ENCODE measurements at regions of chr2 and their contacts with region 1.

Region 1: GRCh38 chr2:95022309-95023221 is 2.9 kb upstream of the MAL start:
- DNase-seq: peak; percentile 85
- H3K4me3 ChIP-seq: peak overlapping the region in 1 of 2 experiments; percentile 10; a peak in 1 of 4 replicates
- H3K27ac ChIP-seq: no peak overlapping the region
- H3K4me1 ChIP-seq: peaks cover 0 to 2% of the 10 kb centered on the region in 2 experiments; a peak in 1 of 4 replicates
- H3K27me3 ChIP-seq: peaks cover 85% of the 10 kb centered on the region
- CTCF ChIP-seq: peak; percentile 86
- EP300 ChIP-seq: no peak
- RAD21 ChIP-seq: peak; percentile 81

Region 2: GRCh38 chr2:95010126-95010525 is 12.4 kb before region 1 on chr2:
- CTCF ChIA-PET with region 1: interaction called, 18 read pairs
- POLR2A ChIA-PET with region 1: no interaction called
- DNase-seq: no peak
- H3K4me3 ChIP-seq: no peak overlapping the region
- H3K27ac ChIP-seq: no peak overlapping the region
- H3K4me1 ChIP-seq: no peaks in the 10 kb centered on the region
- H3K27me3 ChIP-seq: peaks cover 24% of the 10 kb centered on the region; the same call in 1 of the 2 replicates
- CTCF ChIP-seq: no peak
- EP300 ChIP-seq: no peak
- RAD21 ChIP-seq: no peak

Region 3: GRCh38 chr2:95034221-95034620 is 11.7 kb after region 1 on chr2:
- CTCF ChIA-PET with region 1: interaction called, 17 read pairs
- POLR2A ChIA-PET with region 1: no interaction called
- DNase-seq: peak; percentile 42
- H3K4me3 ChIP-seq: no peak overlapping the region
- H3K27ac ChIP-seq: no peak overlapping the region
- H3K4me1 ChIP-seq: peaks cover 0 to 3% of the 10 kb centered on the region in 2 experiments; a peak in 1 of 4 replicates
- H3K27me3 ChIP-seq: peaks cover 40% of the 10 kb centered on the region; the same call in 1 of the 2 replicates
- CTCF ChIP-seq: no peak
- EP300 ChIP-seq: no peak
- RAD21 ChIP-seq: no peak

Region 4: GRCh38 chr2:95053543-95053942 is 31.0 kb after region 1 on chr2:
- CTCF ChIA-PET with region 1: interaction called, 10 read pairs
- POLR2A ChIA-PET with region 1: no interaction called
- DNase-seq: no peak
- H3K4me3 ChIP-seq: no peak overlapping the region
- H3K27ac ChIP-seq: no peak overlapping the region
- H3K4me1 ChIP-seq: no peaks in the 10 kb centered on the region
- H3K27me3 ChIP-seq: peaks cover 50% of the 10 kb centered on the region
- CTCF ChIP-seq: no peak
- EP300 ChIP-seq: no peak
- RAD21 ChIP-seq: no peak

Region 5: GRCh38 chr2:95062242-95063085 is 39.9 kb after region 1 on chr2:
- CTCF ChIA-PET with region 1: interaction called, 10 read pairs
- POLR2A ChIA-PET with region 1: no interaction called
- DNase-seq: no peak
- H3K4me3 ChIP-seq: no peak overlapping the region
- H3K27ac ChIP-seq: no peak overlapping the region
- H3K4me1 ChIP-seq: no peaks in the 10 kb centered on the region
- H3K27me3 ChIP-seq: peaks cover 66% of the 10 kb centered on the region; the same call in 1 of the 2 replicates
- CTCF ChIP-seq: no peak
- EP300 ChIP-seq: no peak
- RAD21 ChIP-seq: no peak

Region 6: GRCh38 chr2:95115418-95115817 is 92.9 kb after region 1 on chr2:
- CTCF ChIA-PET with region 1: interaction called, 57 read pairs
- POLR2A ChIA-PET with region 1: no interaction called
- DNase-seq: peak; percentile 75
- H3K4me3 ChIP-seq: peak overlapping the region in 1 of 2 experiments; percentile 33; a peak in 1 of 4 replicates
- H3K27ac ChIP-seq: no peak overlapping the region
- H3K4me1 ChIP-seq: no peaks in the 10 kb centered on the region
- H3K27me3 ChIP-seq: no peaks in the 10 kb centered on the region
- CTCF ChIP-seq: peak; percentile 82
- EP300 ChIP-seq: no peak
- RAD21 ChIP-seq: peak; percentile 83

Region 7: DNA sequence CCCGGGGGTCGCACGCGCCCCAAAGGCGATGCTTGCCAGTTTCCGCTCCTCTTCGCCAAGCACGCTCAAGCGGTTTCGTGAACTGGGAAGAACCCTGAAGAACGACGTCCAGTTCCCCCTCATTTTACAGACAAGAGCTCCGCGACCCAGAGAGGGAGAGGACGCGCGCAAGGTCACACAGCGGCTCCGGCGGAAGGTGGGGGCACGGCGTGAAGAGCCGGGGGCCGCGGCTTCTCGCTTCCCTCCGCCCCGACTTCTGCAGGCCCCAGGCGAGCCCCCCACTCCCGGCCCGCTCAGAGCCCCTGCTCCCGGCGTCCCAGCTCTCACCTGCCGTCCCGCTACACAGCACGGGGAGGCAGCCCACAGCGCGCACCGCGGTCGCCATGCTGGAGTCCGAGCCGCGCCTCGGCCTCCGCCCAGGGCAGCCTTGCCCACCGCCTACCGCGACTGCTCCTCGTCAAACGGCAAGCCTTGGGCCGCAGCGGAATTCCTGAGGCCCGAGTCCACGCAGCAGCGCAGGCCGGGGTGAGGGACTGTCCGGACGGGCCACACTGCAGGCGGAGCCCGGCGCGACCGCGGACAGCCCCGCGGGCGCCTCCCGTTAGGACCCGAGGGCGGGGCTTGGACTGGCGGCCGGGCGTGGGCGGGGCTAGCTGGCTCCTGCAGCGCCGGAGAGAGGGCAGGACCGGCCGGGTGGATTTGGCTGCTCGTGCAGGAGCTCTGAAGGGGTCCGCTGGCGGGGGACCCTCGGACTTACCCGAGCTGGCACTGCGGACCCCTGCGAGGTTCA is 99.0 kb after region 1 on chr2 and contains the start of gene MRPS5:
- CTCF ChIA-PET with region 1: interaction called, 57 read pairs
- POLR2A ChIA-PET with region 1: no interaction called
- DNase-seq: peak; percentile 96
- H3K4me3 ChIP-seq: peak within 1 kb of the TSS; percentile 77 to 96
- H3K27ac ChIP-seq: peak within 1 kb of the TSS; percentile 77 to 94
- H3K4me1 ChIP-seq: peaks cover 0 to 3% of the 10 kb centered on the region in 2 experiments; a peak in 1 of 4 replicates
- H3K27me3 ChIP-seq: no peaks in the 10 kb centered on the region
- CTCF ChIP-seq: peak; percentile 21; the same call in 1 of the 2 replicates
- EP300 ChIP-seq: 0 out of 4 replicates have a peak, but pooled peaks of 1 of the 2 experiments have one; percentile 26
- RAD21 ChIP-seq: no peak
- polyA plus RNA-seq, gene MRPS5: 32.8 and 40.4 TPM in 2 replicates

Measured in SK-N-SH (cell line).